Activated CD4-positive, alpha-beta T cell treated with anti-CD3 and anti-CD28 coated beads, Interleukin-2, amount 10 ng/mL, durations not matched to agents 24 days and 14 days (primary cell): ENCODE measurements at regions of chr1 and their contacts with region 1.

Region 1: DNA sequence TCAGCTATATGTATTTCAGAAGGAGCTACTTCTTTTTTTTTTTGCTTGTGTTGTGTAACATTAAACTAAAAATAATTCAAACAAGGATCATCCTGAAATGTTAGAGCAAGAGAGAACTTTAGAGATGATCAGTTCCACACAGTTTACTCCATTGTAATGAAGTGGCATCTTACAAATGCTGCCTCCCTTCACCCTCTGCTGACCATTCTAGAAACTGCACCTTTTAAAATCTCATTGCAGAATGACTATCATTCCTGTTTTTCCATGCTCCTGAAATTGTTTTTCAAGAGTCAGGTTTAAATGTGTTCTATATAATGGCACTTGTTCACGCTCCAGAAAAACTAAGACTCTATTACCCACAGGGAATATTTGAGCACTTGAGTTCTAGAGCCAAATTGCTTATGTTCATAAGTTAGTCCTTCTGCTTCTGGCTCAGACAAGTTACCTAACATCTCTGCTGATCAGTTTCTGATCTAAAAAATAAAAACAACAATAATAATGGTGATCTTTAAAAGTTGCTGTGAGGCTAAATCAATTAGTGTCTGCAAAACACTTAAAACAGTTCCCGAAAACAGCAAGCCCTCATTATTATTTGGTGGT is 21.5 kb upstream of the SLC44A5 start:
- DNase-seq: no peak
- H3K4me3 Mint-ChIP-seq: no peak overlapping the region
- H3K27ac Mint-ChIP-seq: no peak overlapping the region
- H3K4me1 Mint-ChIP-seq: no peaks in the 10 kb centered on the region
- H3K27me3 Mint-ChIP-seq: peaks cover 5% of the 10 kb centered on the region

Region 2: GRCh38 chr1:75265792-75266191 is 366.7 kb before region 1 on chr1:
- intact Hi-C with region 1: loop called (anchors 2 kb)
- DNase-seq: peak; percentile 52
- H3K4me3 Mint-ChIP-seq: no peak overlapping the region
- H3K27ac Mint-ChIP-seq: no peak overlapping the region
- H3K4me1 Mint-ChIP-seq: no peaks in the 10 kb centered on the region
- H3K27me3 Mint-ChIP-seq: no peaks in the 10 kb centered on the region

Region 3: DNA sequence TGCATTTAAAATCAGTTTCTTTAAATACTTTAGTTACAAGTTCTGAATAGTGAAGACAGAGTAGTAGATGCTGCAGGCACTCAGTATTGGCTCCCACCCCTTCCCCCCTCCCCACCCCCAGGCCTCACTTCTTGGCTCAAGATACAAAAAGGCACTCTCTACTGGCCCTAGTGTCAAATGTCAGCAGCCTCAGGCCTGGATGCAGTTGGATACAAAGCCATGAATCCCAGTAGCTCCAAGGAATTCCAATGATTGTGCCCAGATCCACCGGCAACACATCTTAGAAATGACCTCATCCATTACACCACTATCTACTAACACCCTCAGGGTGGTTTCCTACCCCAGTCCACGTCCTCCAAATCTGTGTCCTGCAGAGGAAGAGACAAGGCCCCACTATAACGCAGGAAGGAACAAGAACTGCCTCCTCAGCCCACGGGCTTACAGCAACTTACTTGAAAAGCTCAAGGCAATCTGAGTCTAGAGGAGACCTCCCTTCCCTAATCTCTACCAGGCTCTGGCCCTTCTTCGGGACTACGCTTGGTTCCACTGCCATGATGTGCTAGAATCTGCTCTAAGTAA is 109.7 kb after region 1 on chr1:
- intact Hi-C with region 1: no loop called
- DNase-seq: no peak
- H3K4me3 Mint-ChIP-seq: no peak overlapping the region
- H3K27ac Mint-ChIP-seq: no peak overlapping the region
- H3K4me1 Mint-ChIP-seq: peaks cover 2% of the 10 kb centered on the region
- H3K27me3 Mint-ChIP-seq: no peaks in the 10 kb centered on the region

Region 4: DNA sequence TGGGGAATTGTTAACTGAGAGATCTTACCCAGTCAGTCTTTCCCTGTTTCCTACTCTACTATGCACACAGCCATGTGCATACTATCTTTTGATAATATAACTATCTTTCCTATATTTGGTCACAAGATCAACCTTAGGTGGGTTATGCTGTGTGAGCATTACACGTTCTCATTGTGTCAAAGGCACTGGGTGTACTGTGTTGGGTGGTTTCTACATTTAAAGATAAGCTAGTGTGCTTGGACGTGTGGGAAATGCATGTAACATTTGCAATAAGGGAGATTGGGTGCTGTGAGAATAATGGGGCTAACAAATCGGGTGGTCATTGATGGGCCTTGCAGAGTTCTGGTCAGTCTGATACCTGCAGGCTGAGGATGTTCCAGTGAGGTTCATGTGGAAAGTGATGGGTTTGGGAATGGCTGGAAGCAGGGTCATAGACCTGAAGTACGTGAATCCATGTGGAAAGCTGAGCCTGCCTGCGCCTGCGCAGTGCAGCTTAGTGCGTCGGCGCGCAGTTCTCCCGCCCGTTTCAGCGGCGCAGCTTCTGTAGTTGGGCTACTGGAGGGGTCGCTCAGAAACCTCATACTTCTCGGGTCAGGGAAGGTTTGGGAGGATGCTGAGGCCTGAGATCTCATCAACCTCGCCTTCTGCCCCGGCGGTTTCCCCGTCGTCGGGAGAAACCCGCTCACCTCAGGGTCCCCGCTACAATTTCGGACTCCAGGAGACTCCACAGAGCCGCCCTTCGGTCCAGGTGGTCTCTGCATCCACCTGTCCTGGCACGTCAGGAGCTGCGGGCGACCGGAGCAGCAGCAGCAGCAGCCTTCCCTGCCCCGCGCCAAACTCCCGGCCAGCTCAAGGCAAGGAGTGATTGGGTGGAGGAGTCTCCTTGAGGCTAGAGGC is 164.2 kb after region 1 on chr1 and contains the start of gene MSH4:
- intact Hi-C with region 1: no loop called
- DNase-seq: no peak
- H3K4me3 Mint-ChIP-seq: no peak within 1 kb of the TSS
- H3K27ac Mint-ChIP-seq: peak within 1 kb of the TSS; percentile 56
- H3K4me1 Mint-ChIP-seq: peaks cover 14% of the 10 kb centered on the region
- H3K27me3 Mint-ChIP-seq: no peaks in the 10 kb centered on the region
- total RNA-seq, gene MSH4: 0.33 and 0.42 TPM in 2 replicates